ENCODE measurements at regions of chr6 and their contacts with region 1.

Region 1: DNA sequence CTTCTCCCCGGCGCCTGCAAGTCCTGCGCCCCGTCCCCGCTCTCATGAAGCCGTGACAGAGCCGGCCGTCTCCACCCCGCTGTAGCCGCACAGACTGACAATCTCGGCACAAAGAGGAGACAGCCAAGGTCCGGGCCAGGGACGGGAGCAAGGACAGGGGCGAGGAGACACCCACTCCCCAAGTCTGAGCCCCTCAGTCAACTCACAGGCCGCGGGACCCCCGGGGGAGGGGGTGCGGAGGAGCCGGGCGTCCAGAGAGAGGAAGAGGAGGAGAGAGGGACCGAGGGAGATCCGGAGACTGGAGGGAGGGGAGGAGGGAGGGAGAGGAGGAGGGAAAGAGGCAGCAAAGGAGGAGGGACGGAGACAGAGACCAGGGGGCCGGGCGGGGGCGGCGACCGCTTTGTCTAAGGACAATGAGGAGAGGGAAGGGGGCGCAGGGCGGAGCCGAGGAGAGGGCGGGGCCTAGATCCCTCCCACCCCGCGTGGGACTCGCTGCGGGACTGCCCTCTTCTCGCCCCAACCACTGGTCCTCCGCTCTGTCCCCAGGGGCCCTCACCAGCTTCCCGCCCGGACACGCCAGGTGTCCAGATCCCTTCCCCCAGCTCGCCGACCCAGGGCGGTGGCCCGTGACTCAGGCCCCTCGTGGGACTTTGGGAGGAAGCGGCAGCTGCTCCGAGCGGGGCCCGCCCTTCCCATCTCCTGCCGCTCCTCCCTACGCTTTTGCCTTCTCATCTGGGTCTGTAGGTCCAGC is 638 bp upstream of the PPP1R18 start:
- DNase-seq: peak; percentile 90
- ATAC-seq: peak; percentile 20
- H3K4me3 Mint-ChIP-seq: peak overlapping the region; percentile 100
- H3K27ac Mint-ChIP-seq: peak overlapping the region; percentile 89
- H3K4me1 Mint-ChIP-seq: peaks cover 42% of the 10 kb centered on the region
- H3K27me3 Mint-ChIP-seq: no peaks in the 10 kb centered on the region

Region 2: DNA sequence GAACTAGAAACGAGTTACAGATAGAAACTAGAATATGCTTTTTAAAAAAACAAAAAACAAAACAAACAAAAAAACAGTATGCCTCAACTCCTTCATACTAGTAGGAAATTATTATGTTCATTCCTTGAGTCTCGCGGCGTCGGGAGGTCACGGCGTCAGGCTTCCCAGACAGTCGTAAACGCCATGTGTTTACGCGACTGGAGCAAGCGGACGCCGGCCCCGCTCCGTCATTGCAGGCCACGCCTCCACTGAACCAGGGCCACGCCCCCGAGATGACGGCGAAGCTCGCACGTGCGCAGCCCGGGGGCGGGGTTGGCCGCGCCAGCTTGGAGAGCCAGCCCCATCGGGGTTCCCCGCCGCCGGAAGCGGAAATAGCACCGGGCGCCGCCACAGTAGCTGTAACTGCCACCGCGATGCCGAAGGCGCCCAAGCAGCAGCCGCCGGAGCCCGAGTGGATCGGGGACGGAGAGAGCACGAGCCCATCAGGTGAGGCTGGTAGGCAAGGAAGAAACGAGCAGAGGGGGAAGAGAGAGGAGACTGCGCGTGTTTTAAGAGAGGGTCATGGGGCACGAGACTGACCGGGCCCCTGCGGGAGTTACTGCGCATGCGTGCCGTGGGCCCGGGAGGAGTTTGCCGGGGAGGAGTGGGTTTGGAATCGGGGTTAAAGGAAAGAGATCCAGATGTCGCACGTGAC is 115.9 kb before region 1 on chr6 and contains the start of gene ABCF1:
- CTCF ChIA-PET with region 1: interaction called, 3 read pairs
- POLR2A ChIA-PET with region 1: no interaction called
- intact Hi-C with region 1: loop called in 1 of 2 experiments (anchors 1 kb)
- DNase-seq: peak; percentile 100
- ATAC-seq: peak; percentile 86
- H3K4me3 Mint-ChIP-seq: peak within 1 kb of the TSS; percentile 94
- H3K27ac Mint-ChIP-seq: peak within 1 kb of the TSS; percentile 100
- H3K4me1 Mint-ChIP-seq: peaks cover 62% of the 10 kb centered on the region
- H3K27me3 Mint-ChIP-seq: no peaks in the 10 kb centered on the region
- total RNA-seq, gene ABCF1: 100.0 to 105 TPM

Region 3: GRCh38 chr6:30907758-30908591 is 220.9 kb after region 1 on chr6 and contains the start of gene GTF2H4:
- CTCF ChIA-PET with region 1: no interaction called
- POLR2A ChIA-PET with region 1: no interaction called
- intact Hi-C with region 1: loop called in 1 of 2 experiments (anchors 2 kb)
- DNase-seq: peak; percentile 96
- ATAC-seq: peak; percentile 99
- H3K4me3 Mint-ChIP-seq: peak within 1 kb of the TSS; percentile 95
- H3K27ac Mint-ChIP-seq: peak within 1 kb of the TSS; percentile 86
- H3K4me1 Mint-ChIP-seq: peaks cover 17% of the 10 kb centered on the region
- H3K27me3 Mint-ChIP-seq: no peaks in the 10 kb centered on the region
- total RNA-seq, gene GTF2H4: 35.9 to 40.9 TPM